ENCODE measurements at regions of chr19 and their contacts with region 1.

Region 1: GRCh38 chr19:9934132-9934950 is 2.0 kb downstream of the OLFM2 start:
- DNase-seq: peak; percentile 50 to 74
- H3K4me3 ChIP-seq: no peak overlapping the region
- H3K27ac ChIP-seq: no peak overlapping the region
- H3K4me1 ChIP-seq: no peaks in the 10 kb centered on the region
- H3K27me3 ChIP-seq: peaks cover 13% of the 10 kb centered on the region; the same call in 1 of the 2 replicates
- CTCF ChIP-seq: peak; percentile 99

Region 2: GRCh38 chr19:9796113-9796773 is 138.1 kb before region 1 on chr19:
- CTCF ChIA-PET with region 1: no interaction called
- POLR2A ChIA-PET with region 1: no interaction called
- intact Hi-C with region 1: no loop called
- DNase-seq: peak; percentile 75 to 93
- H3K4me3 ChIP-seq: no peak overlapping the region
- H3K27ac ChIP-seq: no peak overlapping the region
- H3K4me1 ChIP-seq: peaks cover 31% of the 10 kb centered on the region
- H3K27me3 ChIP-seq: no peaks in the 10 kb centered on the region
- CTCF ChIP-seq: peak; percentile 90

Region 3: GRCh38 chr19:10027158-10027693 is 92.9 kb after region 1 on chr19:
- CTCF ChIA-PET with region 1: no interaction called
- POLR2A ChIA-PET with region 1: no interaction called
- intact Hi-C with region 1: loop called (anchors 1 kb)
- DNase-seq: peak in 1 of 2 experiments; percentile 43
- H3K4me3 ChIP-seq: no peak overlapping the region
- H3K27ac ChIP-seq: no peak overlapping the region
- H3K4me1 ChIP-seq: peaks cover 3% of the 10 kb centered on the region; the same call in 1 of the 2 replicates
- H3K27me3 ChIP-seq: peaks cover 88% of the 10 kb centered on the region
- CTCF ChIP-seq: no peak

Region 4: GRCh38 chr19:10106100-10106936 is 172.0 kb after region 1 on chr19 and contains the start of gene PPAN:
- CTCF ChIA-PET with region 1: no interaction called
- POLR2A ChIA-PET with region 1: no interaction called
- intact Hi-C with region 1: loop called (anchors 10 kb)
- DNase-seq: peak; percentile 91 to 96
- H3K4me3 ChIP-seq: peak within 1 kb of the TSS; percentile 98
- H3K27ac ChIP-seq: peak within 1 kb of the TSS; percentile 48
- H3K4me1 ChIP-seq: peaks cover 9% of the 10 kb centered on the region
- H3K27me3 ChIP-seq: no peaks in the 10 kb centered on the region
- CTCF ChIP-seq: no peak
- total RNA-seq, gene PPAN: 38.4 and 41.0 TPM in 2 replicates

Region 5: GRCh38 chr19:10388957-10389356 is 454.6 kb after region 1 on chr19:
- CTCF ChIA-PET with region 1: interaction called, 6 read pairs
- POLR2A ChIA-PET with region 1: interaction called, 7 read pairs
- intact Hi-C with region 1: loop called (anchors 1 kb)
- DNase-seq: peak; percentile 62 to 81
- H3K4me3 ChIP-seq: no peak overlapping the region
- H3K27ac ChIP-seq: no peak overlapping the region
- H3K4me1 ChIP-seq: no peaks in the 10 kb centered on the region
- H3K27me3 ChIP-seq: no peaks in the 10 kb centered on the region
- CTCF ChIP-seq: peak; percentile 99

Measured in PC-9 (cell line).